HepG2 (cell line): ENCODE measurements at regions of chr12 and their contacts with region 1.

Region 1: DNA sequence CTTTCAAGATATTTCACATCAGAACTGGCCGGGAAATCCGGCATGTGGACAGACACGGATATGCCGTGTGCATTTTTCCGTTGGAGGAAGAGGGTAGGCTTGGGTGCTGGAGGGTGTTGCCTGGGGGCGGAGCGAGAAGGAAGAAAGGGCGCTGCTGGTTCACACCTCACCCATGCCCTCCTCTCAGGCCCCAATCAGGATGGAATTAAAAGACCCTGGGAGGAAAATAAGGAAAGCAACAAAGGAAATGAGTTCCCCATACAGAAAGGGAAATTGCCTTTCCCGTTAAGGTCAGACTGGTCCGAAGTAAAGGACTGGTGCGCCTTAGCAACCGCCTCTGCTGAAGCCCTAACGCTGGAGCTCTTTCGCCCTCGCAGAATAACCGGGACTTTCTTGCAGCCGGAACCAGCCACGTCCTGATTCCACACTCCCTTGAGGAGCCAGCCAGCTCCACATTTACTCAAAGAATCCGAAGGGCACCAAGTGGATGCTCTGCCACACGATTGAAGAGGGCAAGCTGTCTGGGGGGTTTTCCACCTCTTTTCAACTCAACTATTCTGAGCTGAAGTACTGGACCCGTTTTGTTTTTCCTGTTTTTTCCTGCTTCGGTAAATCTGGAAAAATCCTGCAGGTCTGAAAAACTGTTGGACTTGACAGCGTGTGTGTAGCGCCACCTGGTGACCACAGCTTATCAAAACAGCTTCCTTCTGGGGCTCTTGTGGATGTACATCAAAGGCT is 37.7 kb upstream of the BCL2L14 start:
- DNase-seq: peak; percentile 72
- ATAC-seq: peak; percentile 80
- H3K4me3 ChIP-seq: peak overlapping the region in 2 of 3 experiments; percentile 43 to 59; a peak in 4 of 6 replicates
- H3K27ac ChIP-seq: no peak overlapping the region
- H3K4me1 ChIP-seq: peaks cover 19% of the 10 kb centered on the region
- H3K27me3 ChIP-seq: peaks cover 3 to 6% of the 10 kb centered on the region in 2 experiments; a peak in 1 of 5 replicates
- CTCF ChIP-seq: peak; percentile 90
- EP300 ChIP-seq: no peak
- POLR2A ChIP-seq: no peak
- RAD21 ChIP-seq: peak; percentile 88

Region 2: DNA sequence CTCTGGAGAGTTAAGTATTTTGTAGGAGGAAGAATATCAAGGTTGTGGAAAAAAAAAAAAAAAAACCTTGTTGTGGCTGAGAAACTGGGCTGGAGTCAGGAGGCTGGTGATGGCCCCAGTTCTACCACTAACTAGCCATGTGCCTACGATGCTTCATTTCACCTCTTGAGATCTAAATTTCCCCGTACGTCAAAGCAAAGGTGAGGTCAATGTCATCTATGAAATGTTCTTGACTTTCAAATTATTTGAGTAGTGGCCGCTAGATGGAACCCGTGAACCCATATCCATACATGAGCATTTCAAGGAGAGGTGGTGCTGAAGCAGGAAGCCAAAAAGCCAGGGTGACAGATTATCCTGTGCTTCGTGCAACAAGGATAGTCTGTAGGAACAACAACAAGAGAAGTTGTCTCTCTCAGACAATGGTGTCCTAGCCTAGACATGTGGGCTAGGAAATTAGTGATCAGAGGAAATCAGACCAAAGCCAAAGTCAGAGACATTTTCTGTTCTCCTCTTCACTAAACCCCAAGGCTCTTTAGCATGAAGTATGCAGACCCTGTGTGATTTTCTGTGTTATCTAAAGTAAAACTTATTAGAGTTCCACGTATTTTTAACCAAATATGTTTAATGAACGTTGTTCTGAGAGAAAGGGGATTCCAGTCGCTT is 479.0 kb before region 1 on chr12:
- CTCF ChIA-PET with region 1: interaction called, 6 read pairs
- POLR2A ChIA-PET with region 1: no interaction called
- in situ Hi-C with region 1: no loop called
- intact Hi-C with region 1: loop called (anchors 1 kb)
- DNase-seq: peak; percentile 34
- ATAC-seq: peak; percentile 66
- H3K4me3 ChIP-seq: no peak overlapping the region
- H3K27ac ChIP-seq: no peak overlapping the region
- H3K4me1 ChIP-seq: no peaks in the 10 kb centered on the region
- H3K27me3 ChIP-seq: no peaks in the 10 kb centered on the region; a peak in 1 of 5 replicates
- CTCF ChIP-seq: peak; percentile 73
- EP300 ChIP-seq: no peak
- POLR2A ChIP-seq: no peak
- RAD21 ChIP-seq: no peak

Region 3: DNA sequence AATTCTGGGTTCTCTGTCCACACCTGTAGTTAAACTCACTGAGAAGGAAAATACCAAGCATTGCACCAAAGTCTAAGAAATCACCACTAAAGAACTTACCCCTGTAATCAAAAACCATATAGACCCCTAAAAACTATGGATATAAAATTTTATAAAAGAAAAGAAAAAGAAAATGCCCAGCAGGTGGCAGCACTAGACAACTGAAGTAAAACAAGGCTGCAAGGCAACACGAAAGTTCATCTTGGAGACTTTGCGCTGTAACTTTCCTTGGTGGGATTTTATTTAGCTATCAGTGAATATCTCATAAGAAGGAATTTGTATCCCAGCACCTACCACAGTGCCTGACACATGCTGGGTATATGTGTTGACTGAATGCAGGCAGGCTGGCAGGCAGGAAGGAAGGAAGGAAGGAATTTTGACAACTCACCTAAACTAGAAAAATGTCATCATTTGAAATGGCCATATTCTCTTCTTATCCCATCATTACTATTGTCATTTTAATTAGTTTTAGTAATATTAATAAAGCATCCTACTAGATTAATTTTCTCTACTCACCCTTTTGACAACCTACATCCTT is 451.8 kb before region 1 on chr12:
- CTCF ChIA-PET with region 1: interaction called, 51 read pairs
- POLR2A ChIA-PET with region 1: interaction called, 4 read pairs
- in situ Hi-C with region 1: loop called (anchors 5 kb)
- intact Hi-C with region 1: loop called (anchors 1 kb)
- DNase-seq: peak; percentile 50
- ATAC-seq: no peak
- H3K4me3 ChIP-seq: no peak overlapping the region
- H3K27ac ChIP-seq: no peak overlapping the region
- H3K4me1 ChIP-seq: no peaks in the 10 kb centered on the region
- H3K27me3 ChIP-seq: no peaks in the 10 kb centered on the region; a peak in 1 of 5 replicates
- CTCF ChIP-seq: peak; percentile 59
- EP300 ChIP-seq: no peak
- POLR2A ChIP-seq: no peak
- RAD21 ChIP-seq: peak; percentile 63

Region 4: GRCh38 chr12:11812586-11813427 is 220.2 kb before region 1 on chr12:
- CTCF ChIA-PET with region 1: no interaction called
- POLR2A ChIA-PET with region 1: no interaction called
- in situ Hi-C with region 1: no loop called
- intact Hi-C with region 1: loop called (anchors 5 kb)
- DNase-seq: peak; percentile 78
- ATAC-seq: peak; percentile 91
- H3K4me3 ChIP-seq: peak overlapping the region; percentile 63 to 75 (median 73)
- H3K27ac ChIP-seq: no peak overlapping the region
- H3K4me1 ChIP-seq: peaks cover 31% of the 10 kb centered on the region
- H3K27me3 ChIP-seq: no peaks in the 10 kb centered on the region
- CTCF ChIP-seq: peak; percentile 45
- EP300 ChIP-seq: no peak
- POLR2A ChIP-seq: no peak
- RAD21 ChIP-seq: no peak

Region 5: GRCh38 chr12:11906286-11906935 is 126.6 kb before region 1 on chr12:
- CTCF ChIA-PET with region 1: no interaction called
- POLR2A ChIA-PET with region 1: no interaction called
- in situ Hi-C with region 1: no loop called
- intact Hi-C with region 1: loop called (anchors 10 kb)
- DNase-seq: no peak
- ATAC-seq: no peak
- H3K4me3 ChIP-seq: no peak overlapping the region
- H3K27ac ChIP-seq: no peak overlapping the region
- H3K4me1 ChIP-seq: no peaks in the 10 kb centered on the region
- H3K27me3 ChIP-seq: peaks cover 0 to 8% of the 10 kb centered on the region in 2 experiments; a peak in 1 of 5 replicates
- CTCF ChIP-seq: no peak
- EP300 ChIP-seq: no peak
- POLR2A ChIP-seq: no peak
- RAD21 ChIP-seq: no peak

Region 6: DNA sequence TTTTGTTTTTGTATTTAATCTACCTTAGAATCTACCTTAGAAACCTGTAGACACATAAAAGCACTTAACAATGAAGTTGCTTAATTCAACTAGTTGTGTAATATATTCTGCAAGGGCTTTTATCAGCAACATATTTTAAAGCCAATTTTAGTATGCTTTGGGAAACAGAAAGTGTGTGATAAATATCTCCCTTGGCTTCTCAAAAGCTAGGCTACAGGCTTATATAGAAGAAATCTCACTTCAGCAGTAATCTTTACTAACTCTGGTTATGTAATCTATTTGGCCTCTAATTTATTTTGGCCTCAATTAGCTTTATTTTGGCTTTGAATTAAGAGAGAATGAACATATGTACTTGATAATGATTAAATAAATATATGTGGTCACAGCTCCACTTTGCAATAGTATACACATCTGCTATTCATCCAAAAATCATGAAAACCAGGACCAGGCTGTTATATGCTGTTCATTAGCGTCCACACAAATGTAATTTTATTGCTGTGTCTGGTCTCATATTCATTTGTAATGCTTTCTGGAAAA is 196.6 kb after region 1 on chr12:
- CTCF ChIA-PET with region 1: no interaction called
- POLR2A ChIA-PET with region 1: no interaction called
- in situ Hi-C with region 1: no loop called
- intact Hi-C with region 1: no loop called
- DNase-seq: no peak
- ATAC-seq: no peak
- H3K4me3 ChIP-seq: no peak overlapping the region
- H3K27ac ChIP-seq: no peak overlapping the region
- H3K4me1 ChIP-seq: peaks cover 60% of the 10 kb centered on the region
- H3K27me3 ChIP-seq: no peaks in the 10 kb centered on the region
- CTCF ChIP-seq: no peak
- EP300 ChIP-seq: no peak
- POLR2A ChIP-seq: no peak
- RAD21 ChIP-seq: no peak

Region 7: GRCh38 chr12:12334367-12335040 is 301.5 kb after region 1 on chr12:
- CTCF ChIA-PET with region 1: interaction called, 4 read pairs
- POLR2A ChIA-PET with region 1: interaction called, 4 read pairs
- in situ Hi-C with region 1: no loop called
- intact Hi-C with region 1: loop called (anchors 1 kb)
- DNase-seq: peak; percentile 53
- ATAC-seq: peak; percentile 88
- H3K4me3 ChIP-seq: no peak overlapping the region
- H3K27ac ChIP-seq: no peak overlapping the region
- H3K4me1 ChIP-seq: peaks cover 34% of the 10 kb centered on the region
- H3K27me3 ChIP-seq: no peaks in the 10 kb centered on the region
- CTCF ChIP-seq: peak; percentile 82
- EP300 ChIP-seq: no peak
- POLR2A ChIP-seq: no peak
- RAD21 ChIP-seq: peak; percentile 62; the same call in 1 of the 2 replicates

Region 8: GRCh38 chr12:12704593-12705230 is 671.7 kb after region 1 on chr12:
- CTCF ChIA-PET with region 1: interaction called, 9 read pairs
- POLR2A ChIA-PET with region 1: no interaction called
- in situ Hi-C with region 1: no loop called
- intact Hi-C with region 1: loop called (anchors 1 kb)
- DNase-seq: peak; percentile 92
- ATAC-seq: peak; percentile 99
- H3K4me3 ChIP-seq: peak overlapping the region in 1 of 3 experiments; percentile 6; a peak in 1 of 6 replicates
- H3K27ac ChIP-seq: no peak overlapping the region
- H3K4me1 ChIP-seq: peaks cover 25% of the 10 kb centered on the region
- H3K27me3 ChIP-seq: no peaks in the 10 kb centered on the region; a peak in 1 of 5 replicates
- CTCF ChIP-seq: peak; percentile 92
- EP300 ChIP-seq: no peak; a peak in 1 of 4 replicates
- POLR2A ChIP-seq: no peak
- RAD21 ChIP-seq: peak; percentile 98